ENCODE measurements at regions of chr12 and their contacts with region 1.

Region 1: DNA sequence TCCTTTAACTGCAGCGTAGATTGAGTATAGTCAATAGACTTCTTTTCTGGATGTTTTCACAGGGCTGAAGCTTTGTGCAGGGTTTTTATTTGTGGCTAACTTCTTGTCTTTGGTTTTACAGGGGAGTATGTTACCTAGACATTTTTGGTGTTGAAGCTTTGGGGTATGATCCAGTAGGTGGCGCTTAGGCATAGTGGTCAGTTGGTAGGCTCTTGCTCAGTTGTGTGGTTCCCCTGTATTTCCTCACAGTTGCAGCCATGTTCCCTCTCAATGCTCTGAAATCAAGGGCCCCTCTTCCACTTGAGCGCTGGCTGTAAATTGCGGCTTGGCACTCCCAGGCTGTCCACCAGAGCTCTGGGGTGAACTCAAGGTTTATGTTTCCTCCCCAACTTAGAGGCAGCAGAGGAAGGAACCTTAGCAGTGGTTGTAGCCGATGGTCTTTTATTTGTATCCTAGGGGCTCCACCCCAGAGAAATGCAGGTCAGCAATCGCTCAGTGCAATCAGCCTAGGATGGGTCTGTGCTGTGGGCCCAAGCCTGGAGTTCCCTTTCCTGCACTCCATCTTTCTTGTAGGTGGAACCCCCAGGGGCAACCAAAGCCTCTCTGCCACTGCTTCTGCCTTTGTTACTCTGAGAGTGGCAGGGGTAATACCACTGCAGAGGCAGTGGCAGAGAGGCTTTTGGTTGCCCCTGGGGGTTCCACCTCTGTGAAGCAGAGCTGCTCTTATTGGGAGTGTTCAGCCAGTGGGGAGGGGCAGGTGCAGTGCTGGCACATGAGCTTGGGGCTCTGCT is 55.1 kb downstream of the CMAS start:
- DNase-seq: no peak
- ATAC-seq: peak; percentile 67

Region 2: GRCh38 chr12:22014783-22015144 is 86.4 kb before region 1 on chr12:
- intact Hi-C with region 1: no loop called
- DNase-seq: no peak
- ATAC-seq: peak; percentile 39

Region 3: GRCh38 chr12:22042976-22043669 is 58.0 kb before region 1 on chr12:
- intact Hi-C with region 1: no loop called
- DNase-seq: no peak
- ATAC-seq: no peak

Region 4: DNA sequence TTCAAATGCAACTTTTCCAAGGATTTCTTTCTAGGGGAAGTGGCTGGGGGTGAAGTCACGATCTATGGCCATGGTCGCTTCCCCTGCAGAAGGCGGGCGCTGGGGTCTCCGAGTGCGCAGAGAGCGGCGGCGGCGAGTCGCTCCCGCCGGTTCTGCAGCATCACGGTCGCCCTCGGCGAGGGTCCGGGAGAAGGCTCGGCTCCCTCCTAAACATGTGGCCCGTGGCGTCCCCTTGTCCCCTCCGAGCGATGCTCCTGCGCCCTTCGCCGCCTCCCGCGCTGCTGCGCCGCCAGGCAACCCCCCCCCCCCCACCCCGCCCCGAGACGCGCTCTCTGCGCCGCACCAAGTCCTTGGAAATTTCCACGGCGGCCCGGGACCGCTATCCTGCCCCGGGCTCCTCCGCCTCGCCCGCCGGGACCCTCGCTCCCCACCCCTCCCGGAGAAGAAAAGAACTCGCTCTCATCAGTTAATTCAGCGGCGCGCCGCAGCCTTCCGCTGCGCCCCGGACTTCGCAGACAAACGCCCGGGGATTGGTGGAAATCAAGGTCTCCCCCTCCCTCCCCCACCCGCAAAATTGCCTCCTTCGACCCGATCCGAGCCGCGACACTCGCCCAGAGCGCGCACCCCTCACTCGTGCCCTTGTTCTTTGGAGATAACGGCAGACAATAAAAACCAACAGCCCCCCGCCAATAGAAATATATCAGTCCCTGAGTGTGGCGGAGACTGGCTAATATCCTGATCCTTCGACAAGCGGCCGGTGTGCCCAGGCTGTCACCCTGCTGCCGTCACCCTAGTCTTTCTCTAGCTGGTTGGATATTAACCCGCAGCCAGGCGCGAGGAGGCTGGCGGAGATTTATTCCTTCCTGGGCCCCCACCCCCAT is 233.5 kb after region 1 on chr12 and contains the start of gene ST8SIA1:
- intact Hi-C with region 1: loop called (anchors 1 kb)
- DNase-seq: peak; percentile 78
- ATAC-seq: peak; percentile 67
- total RNA-seq, gene ST8SIA1: 3.6 TPM

Region 5: DNA sequence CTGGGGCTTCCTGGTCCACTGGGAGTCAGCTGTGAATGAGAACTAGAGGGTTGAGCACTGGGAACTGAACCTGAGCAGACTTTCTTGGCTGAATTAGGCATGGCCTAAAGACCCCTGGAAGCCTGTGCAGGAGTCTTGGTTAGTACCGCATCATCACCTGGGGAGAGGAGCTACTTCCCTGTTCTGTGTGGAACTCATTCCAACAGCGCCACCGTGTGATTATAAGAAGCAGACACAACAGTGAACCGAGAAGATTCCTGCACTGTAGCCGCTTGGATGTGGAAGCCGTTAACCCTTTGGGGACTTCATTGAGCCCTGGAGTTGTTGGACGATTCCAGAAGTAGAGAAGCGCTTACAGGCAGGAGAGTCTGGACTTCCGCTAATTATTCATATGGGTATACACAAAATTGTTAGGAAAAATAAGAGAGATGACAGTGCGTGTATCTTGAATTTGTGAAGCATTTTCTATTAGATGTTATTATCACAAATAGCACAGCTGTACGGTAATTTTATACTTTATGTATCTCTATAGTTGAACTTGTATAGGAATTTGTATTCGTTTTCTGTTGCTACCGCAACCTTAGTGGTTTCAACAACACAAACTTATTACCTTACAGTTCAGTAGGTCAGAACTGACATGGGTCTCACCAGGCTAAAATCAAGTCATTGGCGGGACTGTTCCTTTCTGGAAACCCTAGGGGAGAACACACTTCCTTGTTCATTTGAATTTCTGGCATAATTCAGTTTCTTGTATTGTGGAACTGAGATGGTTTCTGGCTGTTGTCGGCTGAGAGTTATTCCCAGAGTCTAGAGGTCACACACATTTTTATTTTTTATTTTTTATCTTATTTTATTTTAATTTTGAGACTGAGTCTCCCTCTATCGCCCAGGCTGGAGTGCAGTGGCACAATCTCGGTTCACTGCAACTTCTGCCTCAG is 342.5 kb after region 1 on chr12:
- intact Hi-C with region 1: loop called (anchors 5 kb)
- DNase-seq: peak; percentile 62
- ATAC-seq: peak; percentile 94